Activated B cell treated with CpG ODN at 0.5 μM for 24 hours (primary cell): ENCODE measurements at regions of chr17 and their contacts with region 1.

Region 1: DNA sequence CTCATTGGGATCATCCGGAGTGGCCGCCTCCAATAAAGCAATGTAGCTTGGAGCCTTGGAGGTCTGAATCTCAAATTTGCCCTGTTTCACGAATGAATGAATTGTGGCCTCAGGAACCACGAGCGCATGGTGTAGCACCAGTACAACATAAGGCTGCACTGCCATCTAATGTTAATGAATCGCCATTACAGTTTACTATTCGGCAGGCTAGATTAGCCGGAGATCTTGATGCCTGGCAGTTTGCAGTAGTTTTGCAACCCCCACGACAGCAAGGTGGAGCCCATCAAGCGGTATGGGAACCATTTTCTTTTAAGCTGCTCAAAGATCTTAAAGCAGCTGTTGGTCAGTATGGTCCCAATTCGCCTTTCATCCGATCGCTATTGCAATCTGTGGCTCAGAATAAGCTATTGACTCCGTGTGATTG is 18.8 kb downstream of the ALOX15B start:
- DNase-seq: no peak
- ATAC-seq: peak; percentile 80
- H3K4me3 Mint-ChIP-seq: no peak overlapping the region
- H3K27ac Mint-ChIP-seq: no peak overlapping the region
- H3K4me1 Mint-ChIP-seq: peaks cover 25% of the 10 kb centered on the region
- H3K27me3 Mint-ChIP-seq: peaks cover 19% of the 10 kb centered on the region
- CTCF ChIP-seq: no peak

Region 2: GRCh38 chr17:7862692-7863437 is 194.8 kb before region 1 on chr17:
- CTCF ChIA-PET with region 1: interaction called, 33 read pairs
- POLR2A ChIA-PET with region 1: interaction called, 6 read pairs
- intact Hi-C with region 1: loop called (anchors 1 kb)
- DNase-seq: no peak
- ATAC-seq: no peak
- H3K4me3 Mint-ChIP-seq: no peak overlapping the region
- H3K27ac Mint-ChIP-seq: no peak overlapping the region
- H3K4me1 Mint-ChIP-seq: peaks cover 11% of the 10 kb centered on the region
- H3K27me3 Mint-ChIP-seq: no peaks in the 10 kb centered on the region
- CTCF ChIP-seq: peak; percentile 90

Region 3: GRCh38 chr17:7989781-7990655 is 67.7 kb before region 1 on chr17:
- CTCF ChIA-PET with region 1: interaction called, 34 read pairs
- POLR2A ChIA-PET with region 1: interaction called, 3 read pairs
- intact Hi-C with region 1: loop called (anchors 1 kb)
- DNase-seq: peak; percentile 96
- ATAC-seq: peak; percentile 94
- H3K4me3 Mint-ChIP-seq: peak overlapping the region; percentile 77
- H3K27ac Mint-ChIP-seq: peak overlapping the region; percentile 75
- H3K4me1 Mint-ChIP-seq: peaks cover 17% of the 10 kb centered on the region
- H3K27me3 Mint-ChIP-seq: peaks cover 9% of the 10 kb centered on the region
- CTCF ChIP-seq: no peak

Region 4: GRCh38 chr17:8109661-8110464 is 52.2 kb after region 1 on chr17:
- CTCF ChIA-PET with region 1: interaction called, 66 read pairs
- POLR2A ChIA-PET with region 1: no interaction called
- intact Hi-C with region 1: loop called (anchors 1 kb)
- DNase-seq: peak; percentile 79
- ATAC-seq: peak; percentile 98
- H3K4me3 Mint-ChIP-seq: peak overlapping the region; percentile 57
- H3K27ac Mint-ChIP-seq: no peak overlapping the region
- H3K4me1 Mint-ChIP-seq: peaks cover 6% of the 10 kb centered on the region
- H3K27me3 Mint-ChIP-seq: peaks cover 34% of the 10 kb centered on the region
- CTCF ChIP-seq: no peak

Region 5: DNA sequence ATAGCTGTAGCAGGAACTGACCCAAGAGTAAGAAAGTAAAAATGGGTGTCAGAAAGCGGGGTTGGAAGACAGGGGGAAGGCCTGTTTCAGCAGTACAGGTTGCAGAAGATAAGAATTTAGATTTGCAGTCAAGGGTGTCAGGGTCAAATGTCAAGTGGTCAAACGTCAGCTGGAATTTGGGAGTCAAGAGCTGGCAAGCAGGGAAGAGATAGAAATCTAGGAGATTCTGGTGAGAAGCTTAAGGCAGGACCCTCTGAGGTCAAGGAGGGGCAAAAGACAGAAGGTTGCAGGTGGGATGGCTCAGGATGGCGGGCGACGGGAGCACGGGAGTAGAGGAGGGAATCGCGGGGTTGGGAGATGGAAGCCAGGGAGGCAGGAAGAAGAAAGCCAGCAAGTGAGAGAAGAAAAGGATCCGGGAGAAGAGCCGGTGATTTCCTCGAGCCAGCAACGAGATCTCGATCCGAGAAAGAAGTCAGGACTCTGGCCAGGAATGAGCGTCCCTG is 237.2 kb after region 1 on chr17:
- CTCF ChIA-PET with region 1: interaction called, 58 read pairs
- POLR2A ChIA-PET with region 1: interaction called, 3 read pairs
- intact Hi-C with region 1: loop called (anchors 1 kb)
- DNase-seq: no peak
- ATAC-seq: no peak
- H3K4me3 Mint-ChIP-seq: peak overlapping the region; percentile 92
- H3K27ac Mint-ChIP-seq: peak overlapping the region; percentile 86
- H3K4me1 Mint-ChIP-seq: peaks cover 30% of the 10 kb centered on the region
- H3K27me3 Mint-ChIP-seq: no peaks in the 10 kb centered on the region
- CTCF ChIP-seq: no peak

Region 6: DNA sequence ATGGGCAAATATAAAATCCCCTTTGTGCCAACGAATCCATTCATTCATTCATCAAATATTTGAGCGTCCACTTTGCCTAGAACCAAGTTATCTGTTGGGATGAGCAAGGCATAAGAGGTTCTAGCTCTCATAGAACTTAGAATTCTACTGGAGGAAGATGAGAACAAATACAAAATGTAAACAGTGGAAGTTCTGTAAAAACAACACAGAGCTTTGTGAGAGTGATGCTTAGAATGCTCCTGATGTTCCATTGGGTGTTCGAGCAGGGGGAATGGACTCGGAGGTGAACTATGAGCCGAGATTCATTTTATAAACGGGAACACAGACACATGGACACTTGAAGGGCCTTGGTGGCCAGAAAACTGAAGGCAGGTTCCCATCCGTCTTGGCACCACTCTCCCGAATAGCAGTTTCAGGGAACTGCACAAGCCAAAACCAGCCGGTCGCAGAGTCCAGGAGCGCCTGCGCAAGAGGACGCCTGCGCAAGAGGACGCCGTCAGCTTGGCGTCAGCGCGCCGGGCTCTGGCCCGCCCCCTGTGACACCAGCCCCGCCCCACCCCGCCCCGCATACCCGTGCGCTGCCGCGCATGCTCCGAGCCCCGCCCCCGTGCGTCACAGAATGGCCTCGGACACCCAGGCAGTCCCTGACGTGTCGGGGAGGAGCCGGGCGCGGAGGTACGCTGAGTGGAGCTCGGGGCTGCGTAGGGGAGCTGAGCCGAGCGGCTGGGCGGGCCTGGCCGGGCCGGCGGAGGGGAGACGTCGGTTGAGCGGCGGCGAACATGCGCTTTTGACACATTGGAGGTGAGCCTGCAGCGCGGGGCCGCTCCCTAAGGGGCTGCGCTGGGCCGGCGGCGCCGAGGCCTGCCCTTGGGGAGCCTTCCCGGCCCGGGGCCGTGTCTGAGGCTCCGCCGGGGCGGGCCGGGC is 377.8 kb after region 1 on chr17 and contains the start of gene NDEL1:
- CTCF ChIA-PET with region 1: no interaction called
- POLR2A ChIA-PET with region 1: no interaction called
- intact Hi-C with region 1: loop called (anchors 5 kb)
- DNase-seq: peak; percentile 97
- ATAC-seq: peak; percentile 94
- H3K4me3 Mint-ChIP-seq: peak within 1 kb of the TSS; percentile 91
- H3K27ac Mint-ChIP-seq: peak within 1 kb of the TSS; percentile 93
- H3K4me1 Mint-ChIP-seq: peaks cover 32% of the 10 kb centered on the region
- H3K27me3 Mint-ChIP-seq: no peaks in the 10 kb centered on the region
- CTCF ChIP-seq: no peak
- total RNA-seq, gene NDEL1: 64.6 and 82.6 TPM in 2 replicates